Activated T-helper 1 cell treated with anti-CD3 and anti-CD28 coated beads, Interleukin-12 subunit alpha, Interleukin-12 subunit beta, Interleukin-2, Interleukin-4 antibody, amounts not matched to agents 30 ng/mL and 10 ng/mL and 1 ng/mL, durations not matched to agents 14 hours and 24 hours and 36 hours (primary cell): ENCODE measurements at regions of chr7 and their contacts with region 1.

Region 1: GRCh38 chr7:22166928-22167327 is 190.0 kb downstream of the RAPGEF5 start:
- DNase-seq: no peak
- H3K4me3 Mint-ChIP-seq: no peak overlapping the region
- H3K27ac Mint-ChIP-seq: no peak overlapping the region
- H3K4me1 Mint-ChIP-seq: no peaks in the 10 kb centered on the region
- H3K27me3 Mint-ChIP-seq: peaks cover 3% of the 10 kb centered on the region

Region 2: GRCh38 chr7:21869785-21870402 is 297.0 kb before region 1 on chr7:
- intact Hi-C with region 1: loop called (anchors 10 kb)
- DNase-seq: no peak
- H3K4me3 Mint-ChIP-seq: no peak overlapping the region
- H3K27ac Mint-ChIP-seq: no peak overlapping the region
- H3K4me1 Mint-ChIP-seq: no peaks in the 10 kb centered on the region
- H3K27me3 Mint-ChIP-seq: no peaks in the 10 kb centered on the region